Breast epithelium (tissue), 4 donors: ENCODE measurements at regions of chr7 and their contacts with region 1.

Region 1: GRCh38 chr7:24819916-24820689 is 62.8 kb upstream of the GSDME start:
- DNase-seq: peak; percentile 69 to 73
- H3K4me3 ChIP-seq: no peak overlapping the region
- H3K27ac ChIP-seq: peak overlapping the region in 1 of 2 donors; percentile 80
- H3K4me1 ChIP-seq: no peaks in the 10 kb centered on the region
- H3K27me3 ChIP-seq: no peaks in the 10 kb centered on the region
- CTCF ChIP-seq: peak; percentile 68 to 87 (median 76)
- POLR2A ChIP-seq: no peak

Region 2: DNA sequence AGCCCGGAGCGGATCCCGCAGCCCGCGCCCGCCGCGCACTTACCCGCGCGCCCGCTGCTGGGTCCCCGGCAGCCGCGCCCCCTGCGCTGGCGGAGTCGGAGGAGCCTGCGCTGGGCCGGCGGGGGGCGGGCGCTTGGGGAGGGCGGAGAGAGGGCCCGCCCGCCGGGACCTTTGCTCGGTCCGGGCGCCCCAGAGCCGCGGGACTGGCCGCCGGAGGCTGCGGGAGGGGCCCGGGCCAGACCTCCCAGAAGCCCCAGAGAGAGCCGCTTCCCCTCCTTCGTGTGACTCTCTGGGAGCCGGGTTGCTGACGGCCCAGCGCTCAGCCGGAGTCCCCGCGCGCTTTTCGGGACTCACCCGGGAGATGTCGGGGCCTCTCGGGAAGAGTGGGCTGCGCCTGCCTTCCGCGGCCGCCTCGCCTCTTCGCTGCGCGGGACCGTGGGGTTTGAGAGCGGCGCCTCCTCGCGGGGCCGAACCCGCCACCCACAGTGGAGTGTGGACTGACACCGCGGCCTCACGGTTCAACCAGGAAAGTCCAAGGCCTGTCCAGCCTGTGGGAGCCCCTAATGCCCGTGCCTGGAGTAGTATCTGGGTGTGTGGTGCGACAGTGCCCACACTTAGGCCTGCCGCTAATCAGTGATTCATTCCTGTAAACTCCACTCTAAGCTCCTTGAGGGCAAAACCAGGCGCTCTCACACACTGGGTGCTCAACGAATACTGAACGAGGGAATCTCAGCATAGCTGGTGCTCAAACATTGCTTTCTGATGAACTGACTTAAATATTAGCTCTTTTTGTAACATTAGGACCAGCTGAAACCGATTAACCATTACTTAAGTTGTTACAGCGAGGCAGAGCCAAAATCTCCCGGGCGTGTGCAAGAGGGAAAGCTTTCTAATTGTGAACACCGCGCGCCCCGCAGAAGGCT is 62.5 kb before region 1 on chr7 and contains the start of gene GSDME:
- intact Hi-C with region 1: no loop called
- DNase-seq: no peak
- H3K4me3 ChIP-seq: peak within 1 kb of the TSS; percentile 64 to 77 (median 74)
- H3K27ac ChIP-seq: peak within 1 kb of the TSS; percentile 79 to 85
- H3K4me1 ChIP-seq: no peaks in the 10 kb centered on the region
- H3K27me3 ChIP-seq: no peaks in the 10 kb centered on the region
- CTCF ChIP-seq: no peak
- POLR2A ChIP-seq: no peak
- total RNA-seq, gene GSDME: 12.3 to 33.5 (median 15.1) TPM

Region 3: DNA sequence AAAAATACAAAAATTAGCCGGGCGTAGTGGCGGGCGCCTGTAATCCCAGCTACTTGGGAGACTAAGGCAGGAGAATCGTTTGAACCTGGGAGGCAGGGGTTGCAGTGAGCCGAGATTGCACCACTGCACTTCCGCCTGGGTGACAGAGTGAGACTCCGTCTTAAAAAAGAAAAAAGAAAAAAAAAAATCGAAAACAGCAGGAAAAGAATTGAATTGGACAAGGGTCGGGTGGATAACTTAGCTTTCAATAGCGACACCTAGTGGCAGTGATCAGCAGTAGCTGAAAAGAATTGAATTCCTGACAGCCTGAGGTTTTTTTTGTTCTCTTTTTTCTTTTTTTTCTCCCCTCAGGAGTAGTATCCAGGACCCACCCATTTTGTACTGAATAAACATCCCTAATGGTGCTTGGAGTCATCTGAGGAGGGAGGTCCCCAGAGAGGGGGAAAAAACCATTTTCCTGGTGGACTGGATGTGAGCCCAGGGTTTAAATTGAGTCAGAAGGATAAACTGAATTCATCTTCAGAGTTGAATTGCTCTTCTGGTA is 249.9 kb after region 1 on chr7:
- intact Hi-C with region 1: loop called (anchors 10 kb)
- DNase-seq: no peak
- H3K4me3 ChIP-seq: peak overlapping the region; percentile 1 to 50 (median 14)
- H3K27ac ChIP-seq: no peak overlapping the region
- H3K4me1 ChIP-seq: no peaks in the 10 kb centered on the region
- H3K27me3 ChIP-seq: no peaks in the 10 kb centered on the region
- CTCF ChIP-seq: peak; percentile 78 to 88 (median 79)
- POLR2A ChIP-seq: no peak